Activated CD4-positive, alpha-beta T cell treated with anti-CD3 and anti-CD28 coated beads, Interleukin-2, amount 10 ng/mL, durations not matched to agents 7 days and 5 days (primary cell): ENCODE measurements at regions of chr15 and their contacts with region 1.

Region 1: DNA sequence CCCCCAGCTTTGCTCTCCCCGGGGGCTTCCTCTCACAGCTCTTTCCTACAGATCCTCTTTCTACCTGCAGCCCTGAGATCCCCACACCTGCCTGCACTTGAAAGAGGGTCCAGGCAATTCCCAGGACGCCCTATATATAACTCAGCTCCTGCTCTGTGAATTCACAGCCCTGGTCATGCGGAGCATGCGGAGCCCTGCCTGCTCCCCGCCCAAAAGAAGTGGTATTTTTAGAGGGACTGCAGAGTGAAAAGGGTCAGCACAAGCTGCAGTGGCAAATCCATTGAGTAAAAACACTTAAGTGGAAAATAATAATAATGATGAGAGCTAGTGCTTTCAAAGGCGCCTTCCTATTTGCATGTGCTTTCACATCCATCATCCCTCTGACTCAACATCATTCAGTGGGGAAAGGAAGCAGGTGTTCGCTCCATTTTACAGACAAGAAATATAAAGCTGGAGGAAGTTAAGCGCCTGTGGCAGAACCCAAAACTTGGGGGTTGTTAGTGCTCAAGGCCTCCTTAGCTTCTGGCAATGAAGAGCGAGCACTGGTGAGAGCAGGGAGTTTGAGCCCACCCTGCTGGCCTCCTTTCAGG is 76.3 kb upstream of the LIPC start:
- DNase-seq: no peak
- H3K4me3 Mint-ChIP-seq: no peak overlapping the region
- H3K27ac Mint-ChIP-seq: no peak overlapping the region
- H3K4me1 Mint-ChIP-seq: peaks cover 25% of the 10 kb centered on the region
- H3K27me3 Mint-ChIP-seq: peaks cover 4% of the 10 kb centered on the region

Region 2: GRCh38 chr15:58340176-58340575 is 15.3 kb before region 1 on chr15:
- CTCF ChIA-PET with region 1: no interaction called
- POLR2A ChIA-PET with region 1: no interaction called
- DNase-seq: no peak
- H3K4me3 Mint-ChIP-seq: no peak overlapping the region
- H3K27ac Mint-ChIP-seq: no peak overlapping the region
- H3K4me1 Mint-ChIP-seq: no peaks in the 10 kb centered on the region
- H3K27me3 Mint-ChIP-seq: no peaks in the 10 kb centered on the region

Region 3: GRCh38 chr15:58374172-58374571 is 18.7 kb after region 1 on chr15:
- CTCF ChIA-PET with region 1: interaction called, 11 read pairs
- POLR2A ChIA-PET with region 1: no interaction called
- DNase-seq: no peak
- H3K4me3 Mint-ChIP-seq: no peak overlapping the region
- H3K27ac Mint-ChIP-seq: no peak overlapping the region
- H3K4me1 Mint-ChIP-seq: peaks cover 8% of the 10 kb centered on the region
- H3K27me3 Mint-ChIP-seq: peaks cover 5% of the 10 kb centered on the region